Left cardiac atrium (tissue), 4 donors: ENCODE measurements at regions of chr5 and their contacts with region 1.

Region 1: GRCh38 chr5:68962757-68963484 is 130.9 kb upstream of the SLC30A5 start:
- DNase-seq: peak; percentile 56
- ATAC-seq: peak; percentile 84 to 90

Region 2: DNA sequence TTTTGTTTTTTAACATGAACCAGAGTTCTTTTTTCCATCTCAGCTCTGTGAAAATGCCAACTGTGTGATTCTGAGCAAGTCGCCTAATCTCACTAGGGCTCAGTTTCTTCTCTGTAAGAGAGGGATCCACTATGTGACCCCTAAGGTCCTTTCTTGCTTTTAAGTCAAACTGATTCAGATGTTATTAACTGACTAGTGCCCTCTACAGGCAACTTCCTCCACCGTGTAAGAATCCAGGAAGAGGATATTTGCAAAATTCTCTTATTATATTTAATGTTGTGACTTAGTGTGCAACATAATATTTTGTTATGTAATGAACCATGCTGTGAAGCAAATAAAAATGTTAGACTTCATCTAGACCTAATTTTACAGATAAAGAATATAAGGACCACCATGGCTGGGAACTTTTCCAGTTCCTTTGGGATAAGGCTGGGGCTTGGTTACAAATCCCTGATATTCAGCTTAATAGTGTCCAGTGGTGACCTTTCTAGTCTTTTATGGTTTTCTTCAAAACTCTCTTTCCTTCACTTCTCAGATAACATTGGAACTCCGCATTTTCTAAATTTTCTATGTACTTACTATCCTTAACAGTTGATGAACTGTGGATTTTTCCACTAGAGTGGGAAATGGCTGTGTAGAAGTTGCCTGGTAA is 502.6 kb before region 1 on chr5:
- intact Hi-C with region 1: loop called in 1 of 2 experiments (anchors 10 kb)
- DNase-seq: no peak
- ATAC-seq: peak; percentile 54 to 60

Region 3: GRCh38 chr5:68730359-68731300 is 232.3 kb before region 1 on chr5:
- intact Hi-C with region 1: loop called in 1 of 2 experiments (anchors 10 kb)
- DNase-seq: peak; percentile 36
- ATAC-seq: peak; percentile 95 to 96

Region 4: DNA sequence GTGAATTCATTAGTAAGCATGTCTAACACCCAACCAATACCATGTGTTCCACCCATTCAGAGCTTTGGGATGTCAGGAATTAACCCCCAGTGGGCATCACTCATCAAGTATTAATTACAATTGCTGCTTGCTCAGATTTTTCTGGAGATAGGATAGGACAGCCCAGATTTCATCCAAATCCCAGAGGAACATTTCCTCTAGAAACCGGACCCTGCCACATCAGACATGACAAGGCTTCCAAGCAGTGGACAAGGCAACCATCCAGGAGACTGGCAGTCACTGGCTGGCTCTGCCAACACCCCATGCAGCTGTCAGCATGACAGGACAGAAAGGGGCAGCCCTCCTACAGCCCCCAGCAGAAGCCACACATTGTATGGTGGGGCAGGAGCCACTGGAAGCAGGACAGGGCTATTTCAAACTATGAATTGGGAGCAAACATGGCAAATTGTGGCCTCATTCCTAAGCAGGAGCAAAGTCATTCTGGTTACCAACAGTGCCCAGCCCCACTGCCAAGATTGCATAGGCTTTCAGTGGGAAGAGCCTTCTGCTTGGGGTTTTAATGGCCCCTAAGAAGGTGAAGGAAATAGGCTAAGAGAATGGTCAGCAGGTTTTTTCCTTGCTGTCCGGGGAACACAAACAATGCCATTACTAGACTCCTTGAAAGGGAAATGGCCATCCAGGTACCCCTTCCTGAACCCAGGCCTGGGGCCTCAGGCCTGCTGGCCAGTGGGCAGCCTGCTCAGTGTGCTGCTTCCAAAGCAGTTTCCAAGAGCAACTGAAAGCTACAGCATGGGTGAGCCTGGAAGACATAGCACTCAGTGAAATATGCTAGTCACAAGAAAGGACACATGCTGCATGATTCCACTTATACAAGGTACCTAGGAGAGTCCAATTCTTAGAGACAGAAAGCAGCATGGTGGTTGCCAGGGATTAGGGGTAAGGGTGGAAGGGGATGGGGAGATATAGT is 163.8 kb before region 1 on chr5:
- intact Hi-C with region 1: loop called in 1 of 2 experiments (anchors 10 kb)
- DNase-seq: no peak
- ATAC-seq: no peak

Region 5: GRCh38 chr5:69074664-69075521 is 112.0 kb after region 1 on chr5:
- intact Hi-C with region 1: no loop called
- DNase-seq: no peak
- ATAC-seq: no peak